ENCODE measurements at regions of chr15 and their contacts with region 1.

Region 1: GRCh38 chr15:99704444-99704838 is 28.8 kb downstream of the LYSMD4 start:
- DNase-seq: peak in 1 of 2 donors; percentile 78
- ATAC-seq: peak; percentile 52 to 88 (median 80)
- H3K4me3 ChIP-seq: peak overlapping the region in 2 of 10 donors; percentile 3 to 13
- H3K27ac ChIP-seq: peak overlapping the region; percentile 59 to 92 (median 83)
- H3K4me1 ChIP-seq: peaks cover 11 to 76% (median 55%) of the 10 kb centered on the region in 9 donors
- H3K27me3 ChIP-seq: no peaks in the 10 kb centered on the region
- CTCF ChIP-seq: peak; percentile 44 to 87 (median 79)

Region 2: GRCh38 chr15:99343881-99344551 is 360.4 kb before region 1 on chr15:
- intact Hi-C with region 1: loop called in 2 of 10 experiments (anchors 2 to 5 kb)
- DNase-seq: peak; percentile 37 to 48
- ATAC-seq: peak; percentile 79 to 93 (median 90)
- H3K4me3 ChIP-seq: no peak overlapping the region
- H3K27ac ChIP-seq: peak overlapping the region in 5 of 10 donors; percentile 17 to 67 (median 57)
- H3K4me1 ChIP-seq: peaks cover 0 to 27% (median 4%) of the 10 kb centered on the region in 9 donors
- H3K27me3 ChIP-seq: no peaks in the 10 kb centered on the region
- CTCF ChIP-seq: peak in 8 of 9 donors; percentile 40 to 73 (median 58)

Region 3: DNA sequence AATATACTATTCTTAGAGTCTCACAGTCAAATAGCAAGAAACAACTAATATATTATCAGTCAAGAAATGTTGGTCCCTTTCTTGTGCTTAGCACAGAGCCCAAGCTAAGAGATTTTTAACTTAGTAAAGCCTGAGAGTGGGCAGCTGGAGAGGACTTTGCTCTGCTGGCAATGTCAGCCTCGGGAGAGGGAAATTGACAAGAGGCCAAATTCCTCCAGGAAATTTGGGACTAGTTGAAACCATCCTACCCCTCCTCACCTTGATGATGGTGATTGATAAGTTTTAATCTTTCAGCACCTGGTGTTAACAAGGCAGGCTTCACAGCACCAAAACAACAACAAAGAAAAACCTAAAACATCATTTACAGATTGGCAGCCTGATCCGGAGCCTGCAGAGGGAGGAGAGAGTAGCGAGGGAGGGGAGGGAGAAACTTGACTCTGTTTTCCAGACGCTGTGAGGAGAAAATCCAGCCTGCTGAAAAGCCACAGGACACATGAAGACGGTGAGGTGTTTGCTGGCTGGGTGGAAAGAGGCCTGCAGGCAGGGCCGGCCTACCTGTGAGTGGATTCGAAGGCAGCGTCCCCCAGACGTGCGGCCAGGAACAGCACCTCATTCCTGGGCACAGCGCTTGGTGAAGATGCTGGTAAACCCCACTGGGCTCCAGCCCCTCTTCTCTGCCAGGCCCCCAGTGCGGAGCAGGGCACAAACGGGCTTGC is 302.3 kb before region 1 on chr15:
- intact Hi-C with region 1: loop called in 8 of 10 experiments (anchors 5 to 10 kb)
- DNase-seq: no peak
- ATAC-seq: peak in 2 of 8 donors; percentile 23 to 44
- H3K4me3 ChIP-seq: no peak overlapping the region
- H3K27ac ChIP-seq: peak overlapping the region in 7 of 10 donors; percentile 41 to 78 (median 45)
- H3K4me1 ChIP-seq: peaks cover 0 to 17% (median 13%) of the 10 kb centered on the region in 9 donors
- H3K27me3 ChIP-seq: no peaks in the 10 kb centered on the region
- CTCF ChIP-seq: no peak

Region 4: DNA sequence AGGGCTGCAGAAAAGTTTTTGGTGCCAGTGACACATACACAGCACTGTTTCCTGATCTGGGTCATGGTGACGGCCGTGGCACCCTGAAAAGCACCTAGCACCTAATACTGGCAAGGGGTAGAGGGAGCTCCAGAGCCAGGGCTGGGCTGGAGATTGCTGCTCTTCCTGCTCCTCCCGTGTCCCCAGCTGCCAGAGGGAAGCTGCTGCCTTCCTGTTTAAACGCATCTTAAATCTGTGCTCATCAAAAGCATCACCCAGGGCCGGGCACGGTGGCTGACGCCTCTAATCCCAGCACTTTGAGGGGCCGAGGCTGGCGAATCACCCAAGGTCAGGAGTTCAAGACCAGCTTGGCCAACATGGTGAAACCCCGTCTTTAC is 295.4 kb before region 1 on chr15:
- intact Hi-C with region 1: loop called in 8 of 10 experiments (anchors 5 to 10 kb)
- DNase-seq: peak; percentile 69 to 70
- ATAC-seq: peak; percentile 82 to 94 (median 90)
- H3K4me3 ChIP-seq: no peak overlapping the region
- H3K27ac ChIP-seq: peak overlapping the region; percentile 1 to 68 (median 52)
- H3K4me1 ChIP-seq: peaks cover 14 to 27% (median 22%) of the 10 kb centered on the region in 9 donors
- H3K27me3 ChIP-seq: no peaks in the 10 kb centered on the region
- CTCF ChIP-seq: peak; percentile 34 to 79 (median 65)

Region 5: DNA sequence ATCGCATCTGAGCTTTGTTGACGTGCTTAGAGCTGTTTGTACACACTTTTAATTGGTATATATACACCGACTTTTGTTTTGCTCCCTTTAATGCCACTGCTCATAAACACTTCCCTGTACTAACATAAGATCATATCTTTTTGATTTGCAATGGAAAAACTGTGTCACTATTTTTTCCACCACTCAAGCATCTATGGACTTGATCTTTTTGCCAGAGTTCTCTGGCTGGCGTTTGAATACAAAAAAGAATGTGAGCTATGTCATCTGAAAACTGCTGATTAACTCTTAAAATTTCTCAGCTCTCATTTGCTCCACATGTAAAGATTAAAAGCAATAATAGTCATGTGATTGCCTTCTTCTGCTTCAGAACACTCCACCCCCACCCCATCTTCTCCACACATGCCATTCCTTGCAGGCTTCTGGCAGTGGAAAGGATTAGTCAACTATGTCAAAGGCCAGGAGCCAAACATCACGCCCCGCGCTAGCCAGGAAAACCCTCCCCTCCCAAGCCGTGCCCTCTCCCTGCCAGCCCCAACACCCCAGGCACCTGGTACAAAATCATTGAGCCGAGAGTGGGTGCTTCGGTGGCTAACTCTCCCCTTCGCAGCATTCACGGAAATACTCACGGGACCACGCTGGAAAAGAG is 262.1 kb before region 1 on chr15:
- intact Hi-C with region 1: loop called in 1 of 10 experiments (anchors 5 kb)
- DNase-seq: peak; percentile 76 to 82
- ATAC-seq: peak; percentile 79 to 94 (median 90)
- H3K4me3 ChIP-seq: peak overlapping the region in 1 of 10 donors; percentile 22
- H3K27ac ChIP-seq: peak overlapping the region; percentile 62 to 94 (median 78)
- H3K4me1 ChIP-seq: peaks cover 36 to 70% (median 50%) of the 10 kb centered on the region in 9 donors
- H3K27me3 ChIP-seq: no peaks in the 10 kb centered on the region
- CTCF ChIP-seq: no peak

Region 6: GRCh38 chr15:99507504-99508310 is 196.7 kb before region 1 on chr15:
- intact Hi-C with region 1: loop called in 2 of 10 experiments (anchors 5 kb)
- DNase-seq: peak; percentile 71 to 82
- ATAC-seq: peak; percentile 78 to 92 (median 86)
- H3K4me3 ChIP-seq: peak overlapping the region in 2 of 10 donors; percentile 5 to 21
- H3K27ac ChIP-seq: peak overlapping the region; percentile 9 to 91 (median 80)
- H3K4me1 ChIP-seq: peaks cover 3 to 93% (median 74%) of the 10 kb centered on the region in 9 donors
- H3K27me3 ChIP-seq: no peaks in the 10 kb centered on the region
- CTCF ChIP-seq: no peak

Region 7: GRCh38 chr15:99578809-99579208 is 125.6 kb before region 1 on chr15:
- intact Hi-C with region 1: loop called in 1 of 10 experiments (anchors 5 kb)
- DNase-seq: no peak
- ATAC-seq: no peak
- H3K4me3 ChIP-seq: no peak overlapping the region
- H3K27ac ChIP-seq: peak overlapping the region in 1 of 10 donors; percentile 14
- H3K4me1 ChIP-seq: peaks cover 8 to 99% (median 63%) of the 10 kb centered on the region in 9 donors
- H3K27me3 ChIP-seq: no peaks in the 10 kb centered on the region
- CTCF ChIP-seq: no peak